HepG2 (cell line): ENCODE measurements at regions of chr7 and their contacts with region 1.

Region 1: DNA sequence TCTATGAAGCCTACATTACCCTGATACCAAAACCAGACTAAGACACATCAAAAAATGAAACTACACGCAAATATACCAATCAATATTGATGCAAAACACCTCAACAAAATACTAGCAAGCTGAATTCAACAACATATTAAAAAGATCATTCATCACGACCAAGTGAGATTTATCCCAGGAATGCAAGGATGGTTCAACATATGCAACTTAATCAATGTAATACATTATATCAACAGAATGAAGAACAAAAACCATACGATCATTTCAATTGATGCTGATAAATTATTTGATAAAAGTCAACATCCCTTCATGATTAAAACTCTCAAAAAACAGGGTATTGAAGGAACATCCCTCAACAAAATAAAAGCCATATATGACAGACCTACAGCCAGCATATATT is 5.7 kb downstream of the CLEC5A start:
- DNase-seq: no peak
- ATAC-seq: no peak
- H3K4me3 ChIP-seq: no peak overlapping the region
- H3K27ac ChIP-seq: no peak overlapping the region
- H3K4me1 ChIP-seq: no peaks in the 10 kb centered on the region
- H3K27me3 ChIP-seq: no peaks in the 10 kb centered on the region
- CTCF ChIP-seq: no peak
- EP300 ChIP-seq: no peak
- POLR2A ChIP-seq: no peak
- RAD21 ChIP-seq: no peak

Region 2: GRCh38 chr7:141960687-141961422 is 19.8 kb after region 1 on chr7:
- CTCF ChIA-PET with region 1: no interaction called
- POLR2A ChIA-PET with region 1: no interaction called
- in situ Hi-C with region 1: no loop called
- intact Hi-C with region 1: loop called (anchors 2 kb)
- DNase-seq: no peak
- ATAC-seq: no peak
- H3K4me3 ChIP-seq: no peak overlapping the region
- H3K27ac ChIP-seq: no peak overlapping the region
- H3K4me1 ChIP-seq: no peaks in the 10 kb centered on the region
- H3K27me3 ChIP-seq: no peaks in the 10 kb centered on the region
- CTCF ChIP-seq: no peak
- EP300 ChIP-seq: no peak
- POLR2A ChIP-seq: no peak
- RAD21 ChIP-seq: no peak